ENCODE measurements at regions of chr2 and their contacts with region 1.

Region 1: GRCh38 chr2:39696838-39697237 is 31.1 kb downstream of the TMEM178A start:
- DNase-seq: peak; percentile 13
- ATAC-seq: no peak
- H3K4me3 ChIP-seq: no peak overlapping the region
- H3K27ac ChIP-seq: no peak overlapping the region
- H3K4me1 ChIP-seq: no peaks in the 10 kb centered on the region
- H3K27me3 ChIP-seq: no peaks in the 10 kb centered on the region
- CTCF ChIP-seq: peak; percentile 30; the same call in 1 of the 2 replicates

Region 2: DNA sequence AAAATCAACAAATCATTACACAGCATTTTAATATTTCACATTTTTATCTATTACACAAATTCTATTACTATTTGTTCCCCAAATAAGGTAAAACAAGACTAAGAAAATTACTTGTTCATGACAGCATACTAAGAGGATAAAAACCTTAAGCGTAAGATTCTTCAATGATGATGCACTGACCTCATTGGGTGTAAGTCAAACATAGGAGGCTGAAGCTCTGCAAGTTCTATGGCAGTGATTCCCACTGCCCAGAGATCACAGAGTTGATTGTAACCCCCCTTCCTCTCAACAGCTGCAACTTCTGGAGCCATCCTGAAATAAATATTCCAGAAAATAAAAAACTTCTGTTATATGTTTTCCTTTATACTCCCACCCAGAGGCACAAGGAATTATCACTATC is 370.9 kb before region 1 on chr2:
- CTCF ChIA-PET with region 1: no interaction called
- POLR2A ChIA-PET with region 1: no interaction called
- in situ Hi-C with region 1: no loop called
- intact Hi-C with region 1: no loop called
- DNase-seq: no peak
- ATAC-seq: no peak
- H3K4me3 ChIP-seq: no peak overlapping the region
- H3K27ac ChIP-seq: no peak overlapping the region
- H3K4me1 ChIP-seq: no peaks in the 10 kb centered on the region
- H3K27me3 ChIP-seq: no peaks in the 10 kb centered on the region
- CTCF ChIP-seq: no peak

Region 3: DNA sequence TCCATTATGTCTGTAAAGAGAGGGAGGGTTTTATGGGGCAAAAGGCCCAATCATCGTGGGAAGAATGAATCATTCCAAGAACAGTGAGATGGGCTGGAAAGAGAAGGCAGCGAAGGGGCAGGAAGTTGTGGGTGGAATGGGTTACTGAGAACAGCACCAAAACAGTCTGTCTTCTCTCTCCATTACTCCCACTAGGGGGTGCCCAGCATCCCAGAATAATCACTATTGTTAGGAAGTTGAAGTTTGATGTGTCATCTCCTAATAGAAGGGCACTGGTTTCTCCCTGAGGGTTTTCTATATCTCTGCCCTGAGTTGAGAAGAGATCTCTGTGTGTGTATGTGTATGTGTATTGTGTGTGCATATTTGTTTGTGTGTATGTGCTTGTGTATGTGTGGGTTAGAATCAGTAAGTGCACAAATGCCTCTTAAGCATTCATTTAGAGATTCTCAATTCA is 183.2 kb before region 1 on chr2:
- CTCF ChIA-PET with region 1: no interaction called
- POLR2A ChIA-PET with region 1: no interaction called
- in situ Hi-C with region 1: no loop called
- intact Hi-C with region 1: loop called (anchors 5 kb)
- DNase-seq: no peak
- ATAC-seq: peak; percentile 85
- H3K4me3 ChIP-seq: no peak overlapping the region
- H3K27ac ChIP-seq: no peak overlapping the region
- H3K4me1 ChIP-seq: no peaks in the 10 kb centered on the region
- H3K27me3 ChIP-seq: no peaks in the 10 kb centered on the region
- CTCF ChIP-seq: peak; percentile 74

Region 4: GRCh38 chr2:39593439-39594393 is 103.1 kb before region 1 on chr2:
- CTCF ChIA-PET with region 1: interaction called, 13 read pairs
- POLR2A ChIA-PET with region 1: no interaction called
- in situ Hi-C with region 1: no loop called
- intact Hi-C with region 1: no loop called
- DNase-seq: peak; percentile 18
- ATAC-seq: peak; percentile 94
- H3K4me3 ChIP-seq: no peak overlapping the region
- H3K27ac ChIP-seq: no peak overlapping the region
- H3K4me1 ChIP-seq: no peaks in the 10 kb centered on the region
- H3K27me3 ChIP-seq: no peaks in the 10 kb centered on the region
- CTCF ChIP-seq: peak; percentile 76

Region 5: GRCh38 chr2:39679805-39680204 is 17.0 kb before region 1 on chr2:
- CTCF ChIA-PET with region 1: no interaction called
- POLR2A ChIA-PET with region 1: no interaction called
- in situ Hi-C with region 1: no loop called
- intact Hi-C with region 1: no loop called
- DNase-seq: no peak
- ATAC-seq: no peak
- H3K4me3 ChIP-seq: no peak overlapping the region
- H3K27ac ChIP-seq: no peak overlapping the region
- H3K4me1 ChIP-seq: no peaks in the 10 kb centered on the region
- H3K27me3 ChIP-seq: peaks cover 25% of the 10 kb centered on the region
- CTCF ChIP-seq: no peak

Region 6: DNA sequence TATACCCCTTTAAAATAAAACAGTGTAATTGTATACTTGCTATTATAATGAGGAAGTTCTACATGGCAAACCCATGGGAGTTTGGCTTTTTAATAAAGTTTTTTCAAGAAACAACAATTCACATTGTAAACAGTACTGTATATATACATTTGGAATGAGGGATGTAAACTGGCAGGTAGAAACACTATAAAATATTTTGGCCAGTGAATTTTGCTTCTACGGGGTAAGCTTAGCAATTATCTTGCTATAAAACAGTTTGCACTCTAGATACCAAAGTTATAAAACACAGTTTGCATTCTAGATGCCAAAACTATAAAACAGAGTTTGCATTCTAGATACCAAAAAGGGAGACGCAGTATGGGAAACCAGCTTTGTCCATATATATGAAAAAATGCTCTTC is 65.6 kb after region 1 on chr2:
- CTCF ChIA-PET with region 1: no interaction called
- POLR2A ChIA-PET with region 1: no interaction called
- in situ Hi-C with region 1: no loop called
- intact Hi-C with region 1: no loop called
- DNase-seq: no peak
- ATAC-seq: no peak
- H3K4me3 ChIP-seq: no peak overlapping the region
- H3K27ac ChIP-seq: no peak overlapping the region
- H3K4me1 ChIP-seq: no peaks in the 10 kb centered on the region
- H3K27me3 ChIP-seq: no peaks in the 10 kb centered on the region
- CTCF ChIP-seq: no peak

Region 7: GRCh38 chr2:40004336-40004735 is 307.5 kb after region 1 on chr2:
- CTCF ChIA-PET with region 1: no interaction called
- POLR2A ChIA-PET with region 1: no interaction called
- in situ Hi-C with region 1: no loop called
- intact Hi-C with region 1: no loop called
- DNase-seq: no peak
- ATAC-seq: no peak
- H3K4me3 ChIP-seq: no peak overlapping the region
- H3K27ac ChIP-seq: no peak overlapping the region
- H3K4me1 ChIP-seq: no peaks in the 10 kb centered on the region
- H3K27me3 ChIP-seq: no peaks in the 10 kb centered on the region
- CTCF ChIP-seq: no peak